CD4-positive, alpha-beta T cell (primary cell): ENCODE measurements at regions of chr7 and their contacts with region 1.

Region 1: GRCh38 chr7:90244909-90245851 is at the start of gene CFAP69:
- DNase-seq: peak; percentile 73 to 90 (median 81)
- ATAC-seq: peak; percentile 87
- H3K4me3 ChIP-seq: peak within 1 kb of the TSS; percentile 82
- H3K4me3 Mint-ChIP-seq: peak within 1 kb of the TSS; percentile 90
- H3K27ac ChIP-seq: no peak within 1 kb of the TSS
- H3K27ac Mint-ChIP-seq: peak within 1 kb of the TSS; percentile 15
- H3K4me1 ChIP-seq: peaks cover 17% of the 10 kb centered on the region
- H3K4me1 Mint-ChIP-seq: peaks cover 26% of the 10 kb centered on the region
- H3K27me3 ChIP-seq: peaks cover 10 to 32% of the 10 kb centered on the region in 2 experiments
- H3K27me3 Mint-ChIP-seq: peaks cover 67% of the 10 kb centered on the region
- CTCF ChIP-seq: no peak
- total RNA-seq, gene CFAP69: not detected

Region 2: DNA sequence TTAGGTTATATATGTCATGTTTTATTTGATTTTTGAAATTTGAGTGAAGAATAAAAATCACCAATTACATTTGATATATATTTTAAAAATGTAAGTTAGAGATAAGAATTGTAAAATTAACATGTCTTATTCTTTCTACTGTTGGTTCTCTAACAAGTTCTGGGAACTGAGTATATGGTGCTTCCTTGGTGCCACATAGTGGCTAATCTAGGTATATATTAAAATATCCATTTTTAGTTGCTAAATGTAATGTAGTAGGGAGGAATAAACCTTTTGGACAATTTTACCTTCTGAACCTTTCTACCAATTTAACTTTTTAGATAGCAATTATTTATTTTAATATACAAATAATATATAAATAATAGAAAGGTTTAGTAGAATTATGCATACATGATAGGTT is 17.3 kb after region 1 on chr7:
- CTCF ChIA-PET with region 1: no interaction called
- POLR2A ChIA-PET with region 1: no interaction called
- intact Hi-C with region 1: no loop called
- DNase-seq: peak in 3 of 14 experiments; percentile 8 to 20 (median 13)
- ATAC-seq: peak; percentile 49
- H3K4me3 ChIP-seq: no peak overlapping the region
- H3K4me3 Mint-ChIP-seq: no peak overlapping the region
- H3K27ac ChIP-seq: no peak overlapping the region
- H3K27ac Mint-ChIP-seq: no peak overlapping the region
- H3K4me1 ChIP-seq: no peaks in the 10 kb centered on the region
- H3K4me1 Mint-ChIP-seq: no peaks in the 10 kb centered on the region
- H3K27me3 ChIP-seq: peaks cover 0 to 4% of the 10 kb centered on the region in 2 experiments
- H3K27me3 Mint-ChIP-seq: peaks cover 42% of the 10 kb centered on the region
- CTCF ChIP-seq: peak; percentile 43

Region 3: DNA sequence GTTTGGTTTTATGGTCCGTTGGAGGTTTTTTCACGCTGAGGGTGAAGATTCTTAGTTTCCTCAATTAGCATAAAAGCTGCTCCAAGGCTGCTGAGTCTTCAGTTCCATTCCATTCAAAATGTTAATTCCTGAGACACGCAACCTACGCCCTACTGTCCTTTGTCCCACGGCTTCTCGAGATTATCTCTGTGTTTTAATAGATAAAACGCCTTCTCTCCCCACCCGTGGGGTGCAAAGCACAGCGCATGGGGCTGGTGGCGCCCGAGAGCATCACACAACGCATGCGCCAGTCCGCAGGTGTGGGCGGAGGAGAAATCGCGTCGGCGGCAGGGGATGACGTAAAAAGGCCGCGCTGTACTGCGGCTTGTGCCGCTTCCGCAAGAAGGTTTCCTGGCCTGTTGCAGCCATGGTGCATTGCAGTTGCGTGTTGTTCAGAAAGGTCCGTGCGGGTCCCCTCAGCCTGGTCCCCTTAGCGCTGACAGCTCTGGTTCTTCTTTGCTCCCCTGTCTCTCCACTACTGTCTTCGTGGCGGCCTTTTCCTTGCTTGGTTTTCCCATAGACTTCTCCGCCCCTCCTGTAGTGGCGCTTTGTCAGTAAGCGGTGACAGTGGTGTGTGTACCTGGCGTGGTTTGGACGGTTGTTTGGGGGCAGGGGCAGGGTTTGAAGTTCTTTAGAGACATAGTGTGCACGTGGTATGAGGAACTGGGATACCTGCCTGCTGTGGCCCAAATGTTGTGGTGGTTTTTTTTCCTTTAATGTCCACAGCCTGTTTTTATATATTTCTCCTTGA is 101.4 kb after region 1 on chr7 and contains the start of gene GTPBP10:
- CTCF ChIA-PET with region 1: no interaction called
- POLR2A ChIA-PET with region 1: no interaction called
- intact Hi-C with region 1: loop called (anchors 5 kb)
- DNase-seq: peak; percentile 92 to 99 (median 93)
- ATAC-seq: peak; percentile 91
- H3K4me3 ChIP-seq: peak within 1 kb of the TSS; percentile 66
- H3K4me3 Mint-ChIP-seq: peak within 1 kb of the TSS; percentile 98
- H3K27ac ChIP-seq: peak within 1 kb of the TSS; percentile 81 to 86
- H3K27ac Mint-ChIP-seq: peak within 1 kb of the TSS; percentile 99
- H3K4me1 ChIP-seq: peaks cover 14% of the 10 kb centered on the region
- H3K4me1 Mint-ChIP-seq: peaks cover 61% of the 10 kb centered on the region
- H3K27me3 ChIP-seq: no peaks in the 10 kb centered on the region
- H3K27me3 Mint-ChIP-seq: no peaks in the 10 kb centered on the region
- CTCF ChIP-seq: peak; percentile 86
- total RNA-seq, gene GTPBP10: 11.8 to 13.7 TPM

Region 4: DNA sequence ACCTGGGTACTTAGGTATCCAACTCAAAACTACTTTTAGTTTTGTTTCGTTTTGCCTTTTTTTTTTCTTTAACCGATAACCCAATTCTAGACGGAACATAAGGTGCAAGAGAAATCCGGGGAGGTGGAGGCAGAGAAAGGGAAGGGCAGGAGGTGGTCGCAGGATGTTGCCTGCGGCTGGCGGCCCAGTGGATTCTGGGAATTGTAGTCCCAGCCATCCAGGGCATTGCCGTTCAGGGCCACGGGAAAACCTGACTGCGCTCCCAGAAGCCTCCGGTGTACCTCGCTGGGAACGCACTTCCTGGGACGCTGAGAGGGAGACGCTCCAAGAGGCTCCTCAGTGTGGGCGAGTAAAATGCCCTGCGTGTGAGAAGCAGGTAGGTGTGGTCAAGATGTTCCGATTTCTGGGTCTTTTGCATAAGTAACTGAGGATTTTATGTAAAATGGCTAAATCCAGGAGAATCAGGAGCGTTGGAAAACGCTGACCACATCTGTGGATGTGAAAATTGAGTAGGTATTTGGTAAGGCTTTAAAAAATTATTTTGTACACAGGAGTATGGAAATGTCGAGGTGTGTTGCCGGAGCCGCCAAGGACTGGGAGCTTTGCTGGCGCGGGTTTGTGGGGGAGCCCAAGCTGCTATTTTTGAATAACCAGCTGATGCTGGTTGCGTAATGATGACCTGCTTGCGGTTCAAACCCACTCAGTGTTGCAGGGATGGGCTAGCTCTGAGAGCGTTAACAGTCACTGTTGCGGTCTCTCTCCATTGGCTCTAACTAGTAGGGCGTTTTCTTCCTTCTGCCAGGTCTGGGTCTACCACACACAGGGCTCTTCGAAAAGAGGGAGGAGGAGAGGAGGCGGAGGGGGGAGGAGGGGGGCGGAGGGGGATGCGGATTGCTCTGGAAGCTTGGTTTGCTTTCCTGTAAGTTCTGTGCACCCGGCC is 158.3 kb after region 1 on chr7 and contains the start of gene CLDN12:
- CTCF ChIA-PET with region 1: no interaction called
- POLR2A ChIA-PET with region 1: no interaction called
- intact Hi-C with region 1: loop called (anchors 5 kb)
- DNase-seq: peak; percentile 32 to 92 (median 58)
- ATAC-seq: peak; percentile 99
- H3K4me3 ChIP-seq: peak within 1 kb of the TSS; percentile 69
- H3K4me3 Mint-ChIP-seq: peak within 1 kb of the TSS; percentile 96
- H3K27ac ChIP-seq: no peak within 1 kb of the TSS
- H3K27ac Mint-ChIP-seq: peak within 1 kb of the TSS; percentile 84
- H3K4me1 ChIP-seq: peaks cover 3% of the 10 kb centered on the region
- H3K4me1 Mint-ChIP-seq: peaks cover 17% of the 10 kb centered on the region
- H3K27me3 ChIP-seq: no peaks in the 10 kb centered on the region
- H3K27me3 Mint-ChIP-seq: no peaks in the 10 kb centered on the region
- CTCF ChIP-seq: no peak
- total RNA-seq, gene CLDN12: 1.1 to 1.4 TPM

Region 5: GRCh38 chr7:90495256-90495655 is 250.1 kb after region 1 on chr7:
- CTCF ChIA-PET with region 1: no interaction called
- POLR2A ChIA-PET with region 1: no interaction called
- intact Hi-C with region 1: no loop called
- DNase-seq: no peak
- ATAC-seq: no peak
- H3K4me3 ChIP-seq: no peak overlapping the region
- H3K4me3 Mint-ChIP-seq: no peak overlapping the region
- H3K27ac ChIP-seq: no peak overlapping the region
- H3K27ac Mint-ChIP-seq: no peak overlapping the region
- H3K4me1 ChIP-seq: no peaks in the 10 kb centered on the region
- H3K4me1 Mint-ChIP-seq: no peaks in the 10 kb centered on the region
- H3K27me3 ChIP-seq: no peaks in the 10 kb centered on the region
- H3K27me3 Mint-ChIP-seq: peaks cover 9% of the 10 kb centered on the region
- CTCF ChIP-seq: no peak